Naive thymus-derived CD4-positive, alpha-beta T cell (primary cell): ENCODE measurements at regions of chr19 and their contacts with region 1.

Region 1: DNA sequence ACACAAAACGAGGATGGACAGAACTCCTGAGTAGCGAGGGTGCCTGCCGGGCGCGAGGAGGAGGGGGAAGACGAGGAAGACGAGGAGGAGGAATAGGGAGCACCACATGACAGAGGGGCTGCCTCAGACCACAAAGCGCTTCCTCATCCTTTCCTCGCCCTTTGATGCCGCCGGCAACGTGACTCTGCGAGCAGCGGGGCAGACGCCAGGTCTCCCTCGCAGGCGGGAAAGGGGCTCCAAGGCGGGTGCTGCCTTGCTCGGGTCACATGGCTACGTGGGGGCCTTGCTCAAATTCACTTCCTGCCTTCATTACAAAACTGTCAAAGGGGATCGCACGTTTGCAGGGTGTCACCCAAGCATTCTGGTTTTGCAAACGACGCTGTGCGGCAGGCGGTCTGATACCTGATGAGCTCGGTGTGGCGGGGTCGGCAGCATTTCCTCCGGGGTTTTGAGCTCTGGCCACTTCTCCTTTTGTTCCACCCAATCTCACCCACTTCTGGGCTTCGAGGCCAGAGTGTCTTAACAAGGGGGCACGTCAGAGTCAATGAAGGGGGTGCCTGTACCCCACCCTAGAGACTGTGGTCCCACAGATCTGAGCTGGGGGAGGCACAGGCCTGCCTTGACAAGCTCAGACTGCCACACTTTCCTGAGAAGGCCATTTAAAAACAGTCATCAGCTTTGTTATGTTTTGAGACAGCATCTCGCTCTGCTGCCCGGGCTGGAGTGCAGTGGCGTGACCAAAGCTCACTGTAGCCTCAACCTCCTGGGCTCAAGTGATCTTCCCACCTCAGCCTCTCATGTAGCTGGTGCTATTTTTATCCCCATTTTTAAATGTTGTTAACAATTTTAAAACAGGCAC is 14.9 kb downstream of the MAP2K2 start:
- DNase-seq: peak; percentile 35 to 83 (median 79)
- ATAC-seq: peak; percentile 67
- H3K4me3 ChIP-seq: peak overlapping the region; percentile 11
- H3K4me3 Mint-ChIP-seq: peak overlapping the region; percentile 54 to 80 (median 74)
- H3K27ac ChIP-seq: peak overlapping the region; percentile 72
- H3K27ac Mint-ChIP-seq: peak overlapping the region; percentile 86 to 97 (median 94)
- H3K4me1 ChIP-seq: peaks cover 44 to 53% of the 10 kb centered on the region in 2 donors
- H3K4me1 Mint-ChIP-seq: peaks cover 34 to 85% (median 55%) of the 10 kb centered on the region in 7 donors
- H3K27me3 ChIP-seq: no peaks in the 10 kb centered on the region
- H3K27me3 Mint-ChIP-seq: no peaks in the 10 kb centered on the region

Region 2: DNA sequence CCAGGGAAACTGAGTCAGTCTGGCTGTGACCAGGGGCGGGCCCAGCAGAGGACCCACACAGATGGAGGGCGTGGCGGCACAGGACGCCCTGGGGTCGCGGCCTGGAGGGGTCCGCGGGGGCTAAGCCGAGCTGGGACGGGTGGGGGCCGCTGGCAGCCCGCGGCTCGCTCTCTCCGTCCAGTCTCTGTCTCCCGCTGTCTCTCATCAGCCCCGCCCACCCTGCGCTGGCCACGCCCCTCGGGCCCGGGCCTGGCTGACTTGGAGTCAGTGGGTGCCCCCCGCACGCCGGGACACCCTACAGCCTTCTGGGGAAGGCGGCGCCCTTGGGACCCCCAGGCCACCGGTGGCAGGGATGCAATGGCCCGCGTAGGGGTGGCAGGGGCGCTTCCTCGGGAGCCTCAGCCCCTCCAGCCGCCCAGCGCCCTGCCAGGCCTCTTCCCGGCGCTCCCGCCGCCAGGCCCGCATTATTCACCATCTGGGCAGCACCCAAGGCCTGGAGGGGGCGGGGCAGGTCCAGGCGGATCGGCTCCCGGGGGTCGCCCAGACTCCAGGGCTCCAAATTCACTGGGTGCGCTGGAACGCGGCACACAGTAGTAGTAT is 502.2 kb before region 1 on chr19 and contains the start of gene TBXA2R:
- CTCF ChIA-PET with region 1: no interaction called
- POLR2A ChIA-PET with region 1: no interaction called
- intact Hi-C with region 1: no loop called
- DNase-seq: peak in 6 of 9 donors; percentile 33 to 68 (median 46)
- ATAC-seq: peak; percentile 58
- H3K4me3 ChIP-seq: peak within 1 kb of the TSS; percentile 44
- H3K4me3 Mint-ChIP-seq: peak within 1 kb of the TSS in 8 of 10 donors; percentile 45 to 69 (median 58)
- H3K27ac ChIP-seq: peak within 1 kb of the TSS; percentile 65
- H3K27ac Mint-ChIP-seq: peak within 1 kb of the TSS in 5 of 9 donors; percentile 41 to 70 (median 53)
- H3K4me1 ChIP-seq: peaks cover 19 to 22% of the 10 kb centered on the region in 2 donors
- H3K4me1 Mint-ChIP-seq: peaks cover 7 to 15% (median 11%) of the 10 kb centered on the region in 7 donors
- H3K27me3 ChIP-seq: no peaks in the 10 kb centered on the region
- H3K27me3 Mint-ChIP-seq: peaks cover 0 to 9% (median 0%) of the 10 kb centered on the region in 5 donors
- total RNA-seq, gene TBXA2R: 0.73 to 5.9 (median 4.1) TPM

Region 3: DNA sequence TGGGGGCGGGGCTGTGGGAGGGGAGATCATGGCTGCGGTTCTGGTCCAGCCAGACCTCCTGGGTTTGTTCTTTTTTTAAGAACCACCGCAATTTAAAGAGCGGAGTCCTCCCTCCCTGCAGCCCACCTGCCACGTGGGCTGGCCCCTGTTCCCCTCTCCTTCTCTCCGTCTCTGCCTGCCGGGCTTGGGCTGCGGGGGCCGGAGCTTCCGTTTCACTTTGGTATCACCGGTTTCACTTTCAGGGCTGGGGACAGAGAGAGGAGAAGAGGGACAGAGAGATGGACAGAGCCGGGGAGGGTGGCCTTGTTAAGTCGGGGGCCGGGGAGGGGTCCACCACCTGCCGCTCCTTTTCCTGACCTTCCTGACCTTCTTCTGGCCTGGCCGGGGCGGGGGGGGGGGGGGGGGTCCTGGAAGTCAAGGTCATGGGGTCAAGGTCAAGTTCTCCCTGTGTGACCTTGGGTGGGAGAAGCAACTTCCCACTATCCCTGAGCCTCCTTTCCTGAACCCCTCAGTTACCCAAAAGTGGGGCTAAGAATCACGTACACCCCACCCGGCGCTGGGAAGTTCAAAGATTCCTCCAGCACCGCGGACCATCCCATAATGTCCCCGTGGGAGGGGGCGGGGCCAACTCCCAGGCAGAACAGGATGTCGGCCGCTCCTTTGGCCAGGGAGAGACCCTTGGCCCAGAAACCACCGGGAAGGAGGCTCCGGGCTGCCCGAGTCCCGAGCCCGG is 30.9 kb before region 1 on chr19:
- CTCF ChIA-PET with region 1: no interaction called
- POLR2A ChIA-PET with region 1: interaction called, 18 read pairs
- intact Hi-C with region 1: no loop called
- DNase-seq: peak in 7 of 9 donors; percentile 35 to 70 (median 47)
- ATAC-seq: peak; percentile 71
- H3K4me3 ChIP-seq: peak overlapping the region; percentile 68
- H3K4me3 Mint-ChIP-seq: peak overlapping the region; percentile 82 to 89 (median 87)
- H3K27ac ChIP-seq: peak overlapping the region; percentile 86
- H3K27ac Mint-ChIP-seq: peak overlapping the region; percentile 85 to 97 (median 88)
- H3K4me1 ChIP-seq: peaks cover 15 to 24% of the 10 kb centered on the region in 2 donors
- H3K4me1 Mint-ChIP-seq: peaks cover 17 to 46% (median 33%) of the 10 kb centered on the region in 7 donors
- H3K27me3 ChIP-seq: no peaks in the 10 kb centered on the region
- H3K27me3 Mint-ChIP-seq: no peaks in the 10 kb centered on the region

Region 4: DNA sequence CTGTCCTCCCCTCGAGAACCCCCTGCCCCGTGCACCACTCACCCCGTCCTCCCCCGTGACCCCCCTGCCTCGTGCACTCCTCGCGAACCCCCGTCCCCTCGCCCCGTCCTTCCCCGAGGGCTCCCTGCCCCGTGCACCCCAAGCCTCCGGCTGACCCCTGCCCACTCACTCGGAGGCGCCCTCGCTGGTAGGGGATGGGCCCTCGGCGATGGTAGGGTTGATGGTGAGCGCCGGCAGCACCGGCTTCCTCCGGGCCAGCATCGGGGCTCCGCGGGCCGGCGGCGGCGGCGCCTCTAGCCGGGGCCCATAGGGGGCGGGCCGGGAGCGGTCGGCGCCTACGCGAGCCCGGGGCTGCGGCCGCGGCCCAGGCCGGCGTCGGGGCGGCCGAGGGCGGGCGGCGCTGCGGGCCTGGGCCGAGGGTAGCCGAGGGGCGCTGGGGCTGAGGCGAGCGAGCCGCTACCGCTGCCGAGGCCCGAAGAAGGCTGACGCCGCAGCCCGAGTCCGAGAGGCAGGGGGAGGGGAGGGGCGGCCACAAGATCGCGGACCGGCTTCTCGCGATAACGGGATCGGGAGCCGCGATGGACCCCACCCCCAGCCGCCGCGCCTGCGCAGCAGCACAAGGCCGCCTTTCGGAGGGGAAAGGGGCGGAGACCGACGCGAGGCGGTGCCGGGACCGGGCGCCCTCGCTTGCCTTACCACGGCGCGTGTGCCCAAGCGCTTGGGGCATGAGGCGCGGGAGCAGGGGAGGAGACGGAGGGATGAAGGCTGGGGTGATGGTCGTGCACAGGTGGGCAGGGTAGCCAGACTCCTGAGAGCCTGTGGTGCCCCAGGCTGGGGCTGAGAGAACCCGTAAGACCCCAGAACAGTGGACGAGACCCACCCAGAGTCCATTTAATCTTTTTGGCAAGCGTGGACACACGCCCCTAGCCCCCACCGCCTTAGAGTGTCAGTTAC is 14.9 kb after region 1 on chr19 and contains the start of gene MAP2K2:
- CTCF ChIA-PET with region 1: no interaction called
- POLR2A ChIA-PET with region 1: interaction called, 6 read pairs
- intact Hi-C with region 1: loop called in 1 of 2 experiments (anchors 1 kb)
- DNase-seq: peak; percentile 91 to 99 (median 96)
- ATAC-seq: peak; percentile 96
- H3K4me3 ChIP-seq: peak within 1 kb of the TSS; percentile 77
- H3K4me3 Mint-ChIP-seq: peak within 1 kb of the TSS; percentile 89 to 100 (median 94)
- H3K27ac ChIP-seq: peak within 1 kb of the TSS; percentile 80
- H3K27ac Mint-ChIP-seq: peak within 1 kb of the TSS; percentile 89 to 97 (median 93)
- H3K4me1 ChIP-seq: peaks cover 10 to 11% of the 10 kb centered on the region in 2 donors
- H3K4me1 Mint-ChIP-seq: peaks cover 17 to 31% (median 25%) of the 10 kb centered on the region in 7 donors
- H3K27me3 ChIP-seq: no peaks in the 10 kb centered on the region
- H3K27me3 Mint-ChIP-seq: no peaks in the 10 kb centered on the region
- total RNA-seq, gene MAP2K2: 87.4 to 162 (median 123) TPM

Region 5: GRCh38 chr19:4310247-4311121 is 201.5 kb after region 1 on chr19:
- CTCF ChIA-PET with region 1: no interaction called
- POLR2A ChIA-PET with region 1: no interaction called
- intact Hi-C with region 1: no loop called
- DNase-seq: no peak
- ATAC-seq: no peak
- H3K4me3 ChIP-seq: no peak overlapping the region
- H3K4me3 Mint-ChIP-seq: no peak overlapping the region
- H3K27ac ChIP-seq: no peak overlapping the region
- H3K27ac Mint-ChIP-seq: no peak overlapping the region
- H3K4me1 ChIP-seq: no peaks in the 10 kb centered on the region
- H3K4me1 Mint-ChIP-seq: peaks cover 0 to 6% (median under 1%) of the 10 kb centered on the region in 7 donors
- H3K27me3 ChIP-seq: no peaks in the 10 kb centered on the region
- H3K27me3 Mint-ChIP-seq: no peaks in the 10 kb centered on the region